ENCODE measurements at regions of chr14 and their contacts with region 1.

Region 1: DNA sequence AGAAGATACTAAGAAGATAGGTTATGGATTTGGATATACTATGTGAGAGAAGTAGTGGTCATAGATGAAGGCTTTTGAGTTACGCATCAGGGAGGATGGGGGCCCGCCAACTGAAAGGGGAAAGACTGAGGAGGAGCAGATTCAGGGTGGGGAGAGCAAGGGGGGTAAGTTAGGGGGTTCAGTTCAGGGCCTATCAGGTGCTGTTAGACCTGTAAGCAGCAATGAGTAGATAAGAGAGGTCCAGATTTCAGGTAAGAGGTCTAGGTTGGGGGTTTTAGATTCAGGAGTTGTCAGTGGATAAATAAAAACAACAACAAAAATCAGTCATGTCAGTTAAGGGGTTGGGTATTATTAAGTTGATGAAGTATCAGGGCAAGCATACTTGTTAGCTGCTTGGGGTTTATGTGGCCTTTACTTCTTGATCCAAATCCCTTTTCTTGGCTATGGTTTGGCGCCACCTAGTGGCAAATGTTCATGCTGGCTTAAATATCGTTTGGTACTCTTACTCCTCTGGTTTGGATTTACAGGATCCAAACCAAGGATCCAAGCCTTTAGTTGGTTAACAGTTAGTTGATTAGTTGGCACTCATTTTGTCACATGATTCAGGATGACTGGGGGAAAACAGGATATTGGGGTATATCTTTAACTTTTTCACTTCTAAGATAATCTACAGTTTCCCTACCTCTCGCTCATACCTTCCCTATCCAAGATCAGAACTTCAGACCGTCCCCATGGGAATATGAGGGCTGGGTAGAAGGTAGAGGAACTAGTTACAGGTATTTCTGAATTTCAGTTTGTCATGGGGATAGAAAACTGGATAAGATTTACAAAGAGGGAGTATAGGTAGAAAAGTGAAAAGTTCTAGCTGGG is 65.1 kb downstream of the PCNX1 start:
- DNase-seq: peak; percentile 94
- ATAC-seq: peak; percentile 78
- H3K4me3 Mint-ChIP-seq: no peak overlapping the region
- H3K27ac Mint-ChIP-seq: peak overlapping the region; percentile 57
- H3K4me1 Mint-ChIP-seq: peaks cover 40% of the 10 kb centered on the region
- H3K27me3 Mint-ChIP-seq: no peaks in the 10 kb centered on the region
- CTCF ChIP-seq: peak; percentile 83

Region 2: DNA sequence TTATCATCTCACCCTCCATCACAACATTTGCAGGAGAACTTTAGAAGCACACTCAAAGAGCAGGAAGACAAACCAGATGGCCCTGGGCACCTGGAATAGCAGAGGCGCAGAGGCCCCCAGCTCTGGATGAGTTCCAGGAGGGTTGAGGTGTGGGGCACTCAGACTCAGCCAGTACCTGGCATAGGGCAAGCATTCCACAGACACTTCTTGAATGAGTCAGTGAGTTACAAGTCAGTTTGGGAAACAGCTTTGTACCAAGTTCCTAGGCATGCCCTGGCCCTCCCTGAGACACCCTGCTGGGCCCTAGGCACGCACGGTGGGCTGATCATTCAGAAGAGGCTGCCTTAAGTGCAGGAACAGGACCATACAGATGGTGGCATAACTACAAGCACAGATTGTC is 217.4 kb before region 1 on chr14:
- CTCF ChIA-PET with region 1: no interaction called
- POLR2A ChIA-PET with region 1: no interaction called
- intact Hi-C with region 1: no loop called
- DNase-seq: no peak
- ATAC-seq: no peak
- H3K4me3 Mint-ChIP-seq: no peak overlapping the region
- H3K27ac Mint-ChIP-seq: no peak overlapping the region
- H3K4me1 Mint-ChIP-seq: no peaks in the 10 kb centered on the region
- H3K27me3 Mint-ChIP-seq: no peaks in the 10 kb centered on the region
- CTCF ChIP-seq: no peak

Region 3: GRCh38 chr14:70873627-70874026 is 98.7 kb before region 1 on chr14:
- CTCF ChIA-PET with region 1: interaction called, 10 read pairs
- POLR2A ChIA-PET with region 1: no interaction called
- intact Hi-C with region 1: no loop called
- DNase-seq: peak; percentile 30
- ATAC-seq: no peak
- H3K4me3 Mint-ChIP-seq: no peak overlapping the region
- H3K27ac Mint-ChIP-seq: no peak overlapping the region
- H3K4me1 Mint-ChIP-seq: peaks cover 19% of the 10 kb centered on the region
- H3K27me3 Mint-ChIP-seq: no peaks in the 10 kb centered on the region
- CTCF ChIP-seq: no peak

Region 4: DNA sequence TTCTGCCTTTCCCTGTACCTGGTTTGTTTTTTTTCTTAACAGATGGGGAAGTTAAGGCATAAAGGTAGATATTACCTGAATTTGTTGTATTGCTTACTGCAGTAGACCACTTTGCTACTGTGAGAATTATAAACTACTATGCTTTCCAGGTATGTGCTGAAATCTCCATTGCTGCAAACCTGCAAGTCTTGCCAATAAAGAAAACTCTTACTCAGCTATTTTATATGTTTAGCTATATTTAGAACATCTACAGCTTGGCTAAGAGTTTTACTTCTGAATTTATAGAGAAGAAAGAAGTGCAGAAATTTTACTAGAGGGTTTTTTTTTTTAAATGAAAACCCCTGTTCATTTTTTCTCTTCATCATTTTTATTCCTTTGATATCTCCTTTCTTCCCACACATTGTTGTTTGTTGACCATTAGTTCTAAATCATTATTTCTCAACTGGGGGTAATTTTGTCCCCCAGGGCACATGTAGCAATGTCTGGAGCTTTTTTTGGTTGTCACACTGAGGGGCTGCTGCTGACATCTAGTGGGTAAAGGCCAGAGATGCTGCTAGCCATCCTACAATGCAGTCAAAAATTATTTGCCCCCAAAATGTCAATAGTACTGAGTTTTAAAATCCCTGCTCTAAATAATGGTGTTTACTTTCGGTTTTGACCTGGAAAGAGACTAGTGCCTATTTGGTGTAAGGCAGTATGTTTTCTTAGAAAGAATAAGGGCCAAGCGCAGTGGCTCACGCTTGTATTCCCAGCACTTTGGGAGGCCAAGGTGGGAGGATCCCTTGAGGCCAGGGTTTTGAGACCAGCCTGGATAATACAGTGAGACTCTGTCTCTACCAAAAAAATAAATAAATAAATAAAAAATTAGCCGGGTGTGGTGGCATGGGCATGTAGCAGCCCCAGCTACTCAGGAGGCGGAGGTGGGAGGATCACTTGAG is 16.5 kb before region 1 on chr14:
- CTCF ChIA-PET with region 1: interaction called, 21 read pairs
- POLR2A ChIA-PET with region 1: no interaction called
- intact Hi-C with region 1: no loop called
- DNase-seq: peak; percentile 58
- ATAC-seq: peak; percentile 80
- H3K4me3 Mint-ChIP-seq: no peak overlapping the region
- H3K27ac Mint-ChIP-seq: no peak overlapping the region
- H3K4me1 Mint-ChIP-seq: peaks cover 37% of the 10 kb centered on the region
- H3K27me3 Mint-ChIP-seq: no peaks in the 10 kb centered on the region
- CTCF ChIP-seq: peak; percentile 78

Region 5: DNA sequence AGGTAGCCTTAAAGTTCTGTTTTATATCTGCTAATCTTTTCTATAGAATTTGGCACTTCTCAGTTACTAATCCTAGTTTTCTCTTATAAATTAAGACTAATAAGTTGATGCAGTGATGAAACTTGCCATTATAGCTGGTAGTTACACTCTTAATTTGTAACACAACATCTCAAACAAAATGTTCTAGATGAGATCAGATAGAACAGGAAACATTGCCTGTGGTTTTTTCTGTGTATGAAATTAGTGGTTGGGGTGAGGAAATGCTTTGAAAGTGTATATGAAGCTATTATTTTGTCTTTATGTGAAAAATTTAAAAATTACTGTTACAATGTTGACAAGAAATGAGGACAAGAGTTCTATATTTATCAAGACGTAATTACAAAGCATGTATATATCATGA is 26.8 kb after region 1 on chr14:
- CTCF ChIA-PET with region 1: interaction called, 17 read pairs
- POLR2A ChIA-PET with region 1: no interaction called
- intact Hi-C with region 1: no loop called
- DNase-seq: no peak
- ATAC-seq: peak; percentile 67
- H3K4me3 Mint-ChIP-seq: no peak overlapping the region
- H3K27ac Mint-ChIP-seq: peak overlapping the region; percentile 78
- H3K4me1 Mint-ChIP-seq: peaks cover 73% of the 10 kb centered on the region
- H3K27me3 Mint-ChIP-seq: no peaks in the 10 kb centered on the region
- CTCF ChIP-seq: no peak

Region 6: GRCh38 chr14:71011479-71011878 is 39.1 kb after region 1 on chr14:
- CTCF ChIA-PET with region 1: interaction called, 10 read pairs
- POLR2A ChIA-PET with region 1: no interaction called
- intact Hi-C with region 1: no loop called
- DNase-seq: no peak
- ATAC-seq: peak; percentile 37
- H3K4me3 Mint-ChIP-seq: no peak overlapping the region
- H3K27ac Mint-ChIP-seq: peak overlapping the region; percentile 13
- H3K4me1 Mint-ChIP-seq: peaks cover 33% of the 10 kb centered on the region
- H3K27me3 Mint-ChIP-seq: no peaks in the 10 kb centered on the region
- CTCF ChIP-seq: peak; percentile 52